MCF 10A (cell line): ENCODE measurements at regions of chr15 and their contacts with region 1.

Region 1: DNA sequence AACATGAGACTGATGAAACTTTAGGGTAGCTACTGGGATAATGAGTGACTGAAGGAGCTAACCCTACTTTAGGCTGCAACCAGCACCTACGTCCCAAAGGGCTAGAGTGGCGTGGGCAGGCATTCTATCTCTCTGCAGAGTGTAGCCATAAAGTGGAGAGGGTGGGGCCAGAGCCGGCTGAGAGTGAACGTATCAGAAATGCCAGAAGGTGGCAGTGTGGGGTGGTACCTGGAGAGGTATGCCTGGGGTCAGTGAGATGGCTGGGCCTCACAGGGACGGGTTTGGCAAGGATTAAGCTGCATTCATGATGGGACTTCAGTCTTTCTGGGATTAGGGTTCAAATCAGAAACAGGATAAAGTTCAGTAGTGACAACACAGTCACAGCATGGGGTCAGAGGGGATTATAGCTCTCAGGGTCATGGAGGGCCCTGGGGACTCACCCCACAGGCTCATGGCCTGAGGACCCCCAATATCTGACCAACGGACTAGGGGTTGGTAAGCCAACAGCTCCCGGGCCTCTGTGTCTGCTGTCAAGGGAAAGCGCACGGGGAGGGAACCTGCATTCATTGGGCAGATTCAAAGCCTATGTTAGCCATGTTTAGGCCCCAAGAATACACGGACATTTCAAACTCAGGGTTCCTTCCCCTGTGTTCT is 86.5 kb upstream of the FOXB1 start:
- DNase-seq: peak; percentile 81
- H3K4me3 Mint-ChIP-seq: no peak overlapping the region
- H3K27ac Mint-ChIP-seq: no peak overlapping the region
- H3K4me1 Mint-ChIP-seq: peaks cover 20% of the 10 kb centered on the region
- H3K27me3 Mint-ChIP-seq: peaks cover 11% of the 10 kb centered on the region
- CTCF ChIP-seq: peak; percentile 77

Region 2: DNA sequence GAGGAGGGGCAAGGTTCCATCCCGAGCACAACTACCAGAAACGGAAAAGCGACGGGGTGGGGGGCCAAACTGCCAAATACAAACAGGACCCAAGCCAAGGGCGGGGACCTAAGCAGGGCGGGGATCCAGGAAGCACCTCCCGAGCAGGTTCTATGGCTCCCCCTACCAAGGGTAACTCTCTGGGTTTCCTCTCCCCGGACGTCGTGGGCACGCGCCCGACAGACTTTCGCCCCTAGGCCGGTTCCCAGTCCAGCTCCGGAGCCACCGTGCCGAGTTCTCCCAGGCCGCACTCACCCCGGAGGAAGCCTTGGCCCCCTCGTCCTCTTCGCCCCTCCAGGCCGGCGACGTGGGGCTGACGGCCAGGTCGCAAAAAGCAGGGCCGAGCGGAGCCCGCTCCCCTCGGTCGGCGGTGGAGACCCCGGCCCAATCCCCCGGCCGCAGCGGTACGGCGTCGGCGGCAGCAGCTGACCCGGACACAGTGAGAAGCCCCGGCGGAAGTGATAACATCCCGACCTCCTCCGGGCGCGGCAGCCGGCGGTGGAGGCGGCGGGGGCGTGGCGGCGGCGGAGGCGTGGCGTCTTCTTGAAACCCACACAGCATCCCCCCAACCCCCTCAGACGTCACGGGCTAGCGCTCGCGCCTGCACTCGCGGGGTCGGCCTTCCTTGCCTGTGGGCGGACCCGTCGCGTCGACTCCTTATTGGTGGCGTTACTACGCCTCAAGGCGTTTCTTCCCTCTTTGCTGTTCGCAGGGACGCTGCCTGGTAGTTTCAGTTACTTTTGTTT is 228.6 kb before region 1 on chr15 and contains the start of gene BNIP2:
- CTCF ChIA-PET with region 1: interaction called, 10 read pairs
- POLR2A ChIA-PET with region 1: no interaction called
- intact Hi-C with region 1: loop called (anchors 5 kb)
- DNase-seq: peak; percentile 96
- H3K4me3 Mint-ChIP-seq: peak within 1 kb of the TSS; percentile 86
- H3K27ac Mint-ChIP-seq: peak within 1 kb of the TSS; percentile 98
- H3K4me1 Mint-ChIP-seq: peaks cover 18% of the 10 kb centered on the region
- H3K27me3 Mint-ChIP-seq: no peaks in the 10 kb centered on the region
- CTCF ChIP-seq: no peak
- total RNA-seq, gene BNIP2: 80.7 and 91.5 TPM in 2 replicates

Region 3: DNA sequence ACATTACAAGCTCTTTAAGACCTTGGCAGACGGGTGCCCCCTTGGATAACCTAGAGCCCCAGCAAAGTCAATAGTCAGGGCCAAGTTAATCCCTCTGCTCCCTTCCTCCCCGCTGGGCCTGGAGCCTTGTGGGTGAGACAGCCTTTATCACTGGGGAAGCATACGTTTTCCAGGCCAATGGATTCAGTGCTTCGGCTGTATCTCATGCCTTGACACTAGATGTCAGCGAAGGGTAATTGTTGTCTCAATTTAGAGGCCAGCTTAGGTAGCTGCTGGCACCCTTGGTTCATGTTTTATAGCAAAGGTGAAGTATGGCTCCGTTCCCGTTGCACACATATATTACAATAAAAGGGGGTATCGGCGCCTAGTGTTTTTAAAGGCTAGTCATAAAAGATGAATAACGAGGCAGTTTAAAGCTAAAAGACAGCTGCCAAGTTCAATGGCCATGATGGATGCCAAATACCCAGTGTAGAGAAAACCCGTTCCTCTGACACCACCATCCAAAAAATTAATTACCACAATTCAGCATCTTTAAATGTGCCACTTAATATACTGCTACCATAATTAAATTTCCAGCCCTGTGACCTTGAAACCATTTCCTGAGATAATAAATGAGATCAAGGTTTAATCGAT is 176.2 kb before region 1 on chr15:
- CTCF ChIA-PET with region 1: interaction called, 34 read pairs
- POLR2A ChIA-PET with region 1: interaction called, 3 read pairs
- intact Hi-C with region 1: no loop called
- DNase-seq: peak; percentile 57
- H3K4me3 Mint-ChIP-seq: no peak overlapping the region
- H3K27ac Mint-ChIP-seq: no peak overlapping the region
- H3K4me1 Mint-ChIP-seq: no peaks in the 10 kb centered on the region
- H3K27me3 Mint-ChIP-seq: no peaks in the 10 kb centered on the region
- CTCF ChIP-seq: peak; percentile 43

Region 4: DNA sequence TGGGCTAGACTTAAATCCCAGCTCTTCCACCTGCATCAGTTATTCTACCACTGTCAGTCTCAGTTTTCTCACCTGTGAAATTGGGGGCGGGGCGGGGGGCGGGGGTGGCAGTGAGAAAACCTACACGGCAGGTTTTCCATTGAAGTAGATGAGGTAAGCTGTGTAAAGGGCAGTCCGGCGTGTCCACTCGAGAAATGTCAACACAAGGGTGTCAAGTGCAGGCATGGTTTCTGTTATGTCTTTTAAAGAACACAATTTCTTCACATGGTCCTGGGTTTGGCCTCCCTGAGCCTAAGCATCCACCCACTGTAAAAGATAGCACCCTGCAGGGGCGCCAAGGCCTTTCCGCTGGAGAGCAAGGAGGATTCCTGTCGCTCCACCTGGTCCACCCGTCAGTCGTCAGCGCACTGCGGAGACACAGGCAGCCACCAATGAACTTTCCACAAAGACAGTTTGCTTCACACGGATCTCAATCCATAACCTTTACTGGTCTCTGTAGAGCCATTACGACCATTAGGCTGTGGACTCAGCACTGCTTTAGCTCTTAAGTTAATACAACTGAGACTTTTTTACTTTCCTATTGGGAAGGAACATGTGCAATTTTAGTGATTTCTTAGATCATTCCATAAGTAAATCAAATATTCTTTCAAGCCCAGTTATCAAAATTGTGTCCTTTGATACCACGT is 13.0 kb before region 1 on chr15:
- CTCF ChIA-PET with region 1: interaction called, 16 read pairs
- POLR2A ChIA-PET with region 1: interaction called, 3 read pairs
- intact Hi-C with region 1: no loop called
- DNase-seq: no peak
- H3K4me3 Mint-ChIP-seq: no peak overlapping the region
- H3K27ac Mint-ChIP-seq: no peak overlapping the region
- H3K4me1 Mint-ChIP-seq: no peaks in the 10 kb centered on the region
- H3K27me3 Mint-ChIP-seq: peaks cover 11% of the 10 kb centered on the region
- CTCF ChIP-seq: no peak

Region 5: GRCh38 chr15:60070838-60071493 is 153.3 kb after region 1 on chr15:
- CTCF ChIA-PET with region 1: interaction called, 14 read pairs
- POLR2A ChIA-PET with region 1: interaction called, 4 read pairs
- intact Hi-C with region 1: no loop called
- DNase-seq: peak; percentile 91
- H3K4me3 Mint-ChIP-seq: peak overlapping the region; percentile 38
- H3K27ac Mint-ChIP-seq: peak overlapping the region; percentile 75
- H3K4me1 Mint-ChIP-seq: peaks cover 18% of the 10 kb centered on the region
- H3K27me3 Mint-ChIP-seq: no peaks in the 10 kb centered on the region
- CTCF ChIP-seq: no peak

Region 6: DNA sequence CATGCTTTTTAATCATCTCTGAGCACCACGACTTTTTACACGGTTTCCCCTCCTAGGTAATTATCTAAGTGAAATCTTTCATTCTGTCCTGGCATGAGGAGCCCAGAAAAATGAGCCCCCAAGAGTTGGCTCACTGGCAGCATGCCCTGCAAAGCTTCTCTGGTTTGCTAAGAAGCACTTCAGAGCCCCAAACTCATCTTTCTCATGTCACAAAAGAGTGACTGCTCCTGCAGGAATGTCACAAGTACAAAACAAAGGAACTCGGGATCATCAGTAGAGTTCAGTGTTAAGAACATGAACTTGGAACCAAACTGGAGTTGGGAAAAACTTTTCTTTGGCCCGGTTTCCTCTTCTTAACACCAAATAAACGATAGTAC is 210.4 kb after region 1 on chr15:
- CTCF ChIA-PET with region 1: interaction called, 46 read pairs
- POLR2A ChIA-PET with region 1: interaction called, 20 read pairs
- intact Hi-C with region 1: loop called (anchors 1 kb)
- DNase-seq: no peak
- H3K4me3 Mint-ChIP-seq: peak overlapping the region; percentile 85
- H3K27ac Mint-ChIP-seq: peak overlapping the region; percentile 94
- H3K4me1 Mint-ChIP-seq: peaks cover 18% of the 10 kb centered on the region
- H3K27me3 Mint-ChIP-seq: no peaks in the 10 kb centered on the region
- CTCF ChIP-seq: no peak